ENCODE measurements at regions of chr5 and their contacts with region 1.

Region 1: DNA sequence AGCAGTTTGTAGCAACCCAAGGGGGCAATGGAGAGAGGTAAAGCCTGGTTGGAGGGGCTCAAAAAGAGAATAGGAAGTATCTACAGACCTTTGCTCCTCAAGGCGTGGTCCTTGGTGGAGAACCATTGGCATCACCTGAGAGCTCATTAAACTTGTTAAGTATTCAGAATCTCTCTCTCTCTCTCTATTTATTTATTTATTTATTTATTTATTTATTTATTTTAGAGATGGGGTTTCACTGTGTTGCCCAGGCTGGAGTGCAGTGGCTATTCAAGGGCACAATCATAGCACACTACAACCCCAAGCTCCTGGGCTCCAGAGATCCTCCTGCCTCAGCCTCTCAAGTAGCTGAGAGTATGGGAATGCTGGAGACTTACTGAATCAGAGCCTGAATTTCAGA is 193.1 kb upstream of the ADCY2 start:
- DNase-seq: no peak
- ATAC-seq: no peak
- H3K4me3 ChIP-seq: no peak overlapping the region
- H3K4me3 Mint-ChIP-seq: no peak overlapping the region
- H3K27ac ChIP-seq: no peak overlapping the region
- H3K27ac Mint-ChIP-seq: no peak overlapping the region
- H3K4me1 ChIP-seq: no peaks in the 10 kb centered on the region
- H3K4me1 Mint-ChIP-seq: no peaks in the 10 kb centered on the region
- H3K27me3 ChIP-seq: no peaks in the 10 kb centered on the region
- H3K27me3 Mint-ChIP-seq: no peaks in the 10 kb centered on the region
- CTCF ChIP-seq: no peak

Region 2: DNA sequence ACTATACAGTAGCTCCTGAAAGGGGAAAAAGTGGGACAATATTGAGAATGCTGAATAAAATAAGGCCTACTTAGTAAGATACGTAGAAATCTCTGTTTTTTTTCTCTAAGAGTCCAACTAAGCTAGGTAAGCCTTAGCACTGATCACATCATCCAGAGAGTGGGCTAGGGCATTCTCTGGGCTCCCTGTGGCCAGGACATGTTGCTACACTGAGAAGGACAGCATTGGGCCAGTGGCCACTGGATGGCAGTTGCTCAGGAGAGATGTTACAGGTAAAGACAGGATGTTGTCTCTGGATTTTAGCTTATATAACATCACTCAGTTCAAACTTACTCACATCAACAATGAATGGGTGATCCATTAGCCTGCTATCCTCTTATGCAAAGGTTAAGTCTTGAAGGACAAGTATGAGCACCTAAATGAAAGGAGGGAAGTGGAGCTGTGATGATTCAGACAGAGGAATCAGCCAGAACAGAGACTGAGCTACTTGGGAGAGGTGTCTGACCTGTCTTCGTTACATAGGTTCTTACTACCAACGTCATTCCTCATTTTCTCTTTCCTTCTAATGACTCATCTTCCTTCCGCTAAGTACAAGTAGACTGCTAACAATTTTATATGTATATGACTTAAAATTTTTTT is 33.5 kb before region 1 on chr5:
- CTCF ChIA-PET with region 1: no interaction called
- POLR2A ChIA-PET with region 1: no interaction called
- intact Hi-C with region 1: loop called in 1 of 2 experiments (anchors 5 kb)
- DNase-seq: no peak
- ATAC-seq: no peak
- H3K4me3 ChIP-seq: no peak overlapping the region
- H3K4me3 Mint-ChIP-seq: no peak overlapping the region
- H3K27ac ChIP-seq: no peak overlapping the region
- H3K27ac Mint-ChIP-seq: no peak overlapping the region
- H3K4me1 ChIP-seq: no peaks in the 10 kb centered on the region
- H3K4me1 Mint-ChIP-seq: no peaks in the 10 kb centered on the region
- H3K27me3 ChIP-seq: no peaks in the 10 kb centered on the region
- H3K27me3 Mint-ChIP-seq: no peaks in the 10 kb centered on the region
- CTCF ChIP-seq: no peak

Measured in CD8-positive, alpha-beta T cell (primary cell).